Mammary epithelial cell (primary cell): ENCODE measurements at regions of chr12 and their contacts with region 1.

Region 1: DNA sequence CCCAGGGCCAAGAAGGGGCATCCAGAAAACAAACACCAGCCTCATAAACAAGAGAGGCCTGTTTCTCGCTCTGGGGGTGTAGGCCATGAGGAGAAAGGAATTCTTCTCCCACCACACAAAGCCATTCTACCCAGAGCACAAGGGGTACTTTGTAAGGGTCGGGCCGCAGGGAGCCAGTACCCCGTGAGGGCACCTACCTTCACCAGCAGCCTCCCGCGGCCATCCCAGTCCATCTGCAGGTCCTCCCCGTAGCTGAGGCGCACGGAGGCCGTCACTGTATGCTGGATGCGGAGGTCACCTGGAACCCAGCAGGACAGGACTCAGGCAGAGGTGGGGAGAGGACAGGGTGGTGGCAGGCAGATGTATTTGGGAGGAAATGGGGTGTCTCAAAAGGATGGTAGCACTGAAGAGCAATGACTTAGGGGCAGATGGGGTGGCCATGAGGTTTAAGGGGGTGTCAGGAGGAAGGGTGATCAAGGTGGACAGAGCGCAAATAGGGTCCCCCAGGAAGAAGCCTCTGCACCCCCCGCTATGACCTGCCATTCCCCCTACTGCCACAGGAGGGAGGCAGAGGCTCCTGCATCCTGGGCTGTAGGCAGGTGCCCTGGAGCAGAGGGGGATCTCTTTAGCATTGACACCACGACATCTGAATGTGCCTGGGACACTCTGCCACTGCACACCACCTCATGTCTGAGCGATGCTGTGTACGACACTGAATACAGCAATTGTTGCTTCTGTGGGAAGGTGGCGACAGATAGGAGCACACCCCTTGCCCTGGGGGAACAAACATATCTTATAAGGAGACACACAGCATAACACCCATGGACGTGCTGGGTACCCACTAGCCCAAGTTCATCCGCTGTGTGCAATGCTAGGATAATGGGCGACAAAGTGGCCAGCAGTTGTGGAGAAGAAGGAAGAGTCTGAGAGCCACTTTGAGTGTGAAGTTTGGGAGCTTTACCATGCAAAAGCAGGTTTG is 61.4 kb downstream of the VWF start:
- DNase-seq: peak; percentile 31
- H3K4me3 ChIP-seq: no peak overlapping the region
- H3K27ac ChIP-seq: no peak overlapping the region
- H3K4me1 ChIP-seq: no peaks in the 10 kb centered on the region
- H3K27me3 ChIP-seq: no peaks in the 10 kb centered on the region
- CTCF ChIP-seq: peak; percentile 96 to 97

Region 2: DNA sequence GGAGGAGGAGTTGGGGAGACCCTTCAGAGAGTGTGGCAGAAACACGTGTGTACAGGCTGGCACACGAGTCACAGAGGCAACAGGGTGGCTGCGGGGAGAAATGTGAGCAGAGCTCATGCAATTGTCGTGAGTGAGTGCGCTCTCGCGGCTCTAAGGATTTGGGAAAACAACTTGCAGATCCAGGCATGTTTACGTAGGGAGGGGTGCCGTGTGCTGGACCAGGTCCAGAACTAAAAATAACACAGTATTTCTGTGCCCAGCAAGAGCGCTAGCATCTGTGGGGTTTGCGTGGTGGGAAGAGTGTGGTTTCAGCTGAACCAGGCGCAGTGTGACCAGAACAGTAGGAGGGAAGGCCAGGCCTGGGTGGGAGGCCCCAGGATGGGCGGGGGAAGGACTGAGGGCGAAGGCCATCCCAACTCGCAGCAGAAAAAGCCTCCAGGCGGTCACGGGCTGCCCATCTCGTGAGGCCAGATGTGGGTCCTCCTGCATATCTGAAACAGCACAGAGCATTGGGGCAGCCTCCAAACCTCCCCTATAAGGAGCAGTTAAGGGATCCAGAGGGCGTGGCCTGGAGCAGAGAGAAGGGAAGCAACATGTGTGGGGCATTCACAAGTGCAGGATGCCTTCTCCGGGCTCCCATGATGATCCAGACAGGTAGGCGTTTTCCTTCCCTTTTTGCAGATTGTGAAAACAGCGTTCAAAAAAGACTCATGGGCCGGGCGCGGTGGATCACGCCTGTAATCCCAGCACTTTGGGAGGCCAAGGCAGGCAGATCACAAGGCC is 119.3 kb after region 1 on chr12:
- CTCF ChIA-PET with region 1: no interaction called
- dilution Hi-C with region 1: no loop called
- in situ Hi-C with region 1: no loop called
- intact Hi-C with region 1: loop called (anchors 5 kb)
- DNase-seq: peak; percentile 79
- H3K4me3 ChIP-seq: no peak overlapping the region
- H3K27ac ChIP-seq: no peak overlapping the region
- H3K4me1 ChIP-seq: peaks cover 27% of the 10 kb centered on the region
- H3K27me3 ChIP-seq: no peaks in the 10 kb centered on the region
- CTCF ChIP-seq: no peak

Region 3: GRCh38 chr12:6278439-6279255 is 215.6 kb after region 1 on chr12:
- CTCF ChIA-PET with region 1: interaction called, 6 read pairs
- dilution Hi-C with region 1: no loop called
- in situ Hi-C with region 1: loop called (anchors 5 kb)
- intact Hi-C with region 1: loop called (anchors 1 kb)
- DNase-seq: peak; percentile 93
- H3K4me3 ChIP-seq: peak overlapping the region; percentile 5 to 42 (median 38)
- H3K27ac ChIP-seq: peak overlapping the region; percentile 99
- H3K4me1 ChIP-seq: peaks cover 58% of the 10 kb centered on the region
- H3K27me3 ChIP-seq: no peaks in the 10 kb centered on the region
- CTCF ChIP-seq: peak; percentile 50 to 68

Region 4: DNA sequence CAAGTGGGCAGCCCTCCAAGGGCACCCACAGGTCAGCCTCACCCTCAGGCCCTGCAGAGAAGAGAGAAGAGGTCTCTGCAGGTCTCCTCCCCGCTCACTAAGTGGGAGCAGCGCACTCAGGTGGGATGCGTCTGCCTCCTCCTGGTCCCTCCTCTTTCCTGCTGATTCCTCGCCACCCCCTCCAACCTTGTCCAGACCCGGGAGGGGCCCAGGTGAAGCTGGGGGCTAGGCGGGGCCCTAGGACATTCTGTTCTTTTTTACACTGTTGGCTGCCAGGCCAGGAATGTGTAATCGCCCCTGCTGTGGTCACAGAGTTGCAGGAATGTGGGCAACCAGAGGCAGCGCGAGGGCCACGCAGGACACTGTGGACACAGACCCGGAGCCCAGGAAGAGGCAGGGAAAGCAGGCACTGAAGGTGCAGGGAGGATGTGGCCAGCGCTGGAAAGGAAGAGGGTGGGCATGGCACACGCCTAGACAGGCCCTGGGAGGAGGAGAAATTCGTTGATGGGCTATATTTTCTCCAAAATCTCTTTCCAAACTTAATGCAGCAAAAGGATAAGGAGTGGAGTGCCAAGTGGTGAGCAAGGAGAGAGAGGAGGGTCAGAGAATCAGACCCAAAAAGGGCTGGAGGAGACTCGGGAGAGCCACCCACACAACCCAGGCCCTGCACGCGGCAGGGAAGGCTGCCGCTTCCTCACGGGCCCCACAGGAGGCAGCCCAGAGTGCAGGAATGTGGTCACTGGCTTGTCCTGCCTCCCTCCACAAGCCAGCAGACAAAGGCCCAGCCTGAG is 313.2 kb after region 1 on chr12:
- CTCF ChIA-PET with region 1: no interaction called
- dilution Hi-C with region 1: no loop called
- in situ Hi-C with region 1: no loop called
- intact Hi-C with region 1: loop called (anchors 5 kb)
- DNase-seq: peak; percentile 90
- H3K4me3 ChIP-seq: peak overlapping the region; percentile 64 to 90 (median 87)
- H3K27ac ChIP-seq: peak overlapping the region; percentile 92
- H3K4me1 ChIP-seq: peaks cover 41% of the 10 kb centered on the region
- H3K27me3 ChIP-seq: no peaks in the 10 kb centered on the region
- CTCF ChIP-seq: peak; percentile 29 to 64